ENCODE measurements at regions of chr7 and their contacts with region 1.

Region 1: DNA sequence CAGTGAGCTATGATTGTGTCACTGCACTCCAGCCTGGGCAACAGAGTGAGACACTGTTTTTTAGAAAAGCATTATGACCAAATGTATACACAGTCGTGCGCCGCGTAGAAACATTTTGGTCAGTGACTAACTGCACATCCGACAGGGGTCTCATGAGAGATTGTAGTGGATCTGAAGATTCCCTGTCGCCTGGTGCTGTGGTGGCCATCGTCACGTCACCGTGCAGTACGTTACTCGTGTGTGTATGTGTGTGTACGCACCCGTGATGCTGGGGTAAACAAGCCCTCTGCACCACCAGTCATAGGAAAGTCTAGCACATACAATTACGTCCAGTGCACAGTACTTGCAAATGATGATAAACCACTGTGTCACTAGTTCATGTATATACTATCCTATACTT is 109.4 kb downstream of the ELFN1 start:
- DNase-seq: no peak
- H3K4me3 ChIP-seq: no peak overlapping the region
- H3K27ac ChIP-seq: no peak overlapping the region
- H3K27me3 ChIP-seq: no peaks in the 10 kb centered on the region
- CTCF ChIP-seq: no peak

Region 2: GRCh38 chr7:2270061-2270460 is 490.6 kb after region 1 on chr7:
- CTCF ChIA-PET with region 1: no interaction called
- POLR2A ChIA-PET with region 1: interaction called, 10 read pairs
- DNase-seq: no peak
- H3K4me3 ChIP-seq: no peak overlapping the region
- H3K27ac ChIP-seq: peak overlapping the region; percentile 39
- H3K27me3 ChIP-seq: no peaks in the 10 kb centered on the region
- CTCF ChIP-seq: no peak

Measured in AG04450 (cell line).